ENCODE measurements at regions of chr10 and their contacts with region 1.

Region 1: DNA sequence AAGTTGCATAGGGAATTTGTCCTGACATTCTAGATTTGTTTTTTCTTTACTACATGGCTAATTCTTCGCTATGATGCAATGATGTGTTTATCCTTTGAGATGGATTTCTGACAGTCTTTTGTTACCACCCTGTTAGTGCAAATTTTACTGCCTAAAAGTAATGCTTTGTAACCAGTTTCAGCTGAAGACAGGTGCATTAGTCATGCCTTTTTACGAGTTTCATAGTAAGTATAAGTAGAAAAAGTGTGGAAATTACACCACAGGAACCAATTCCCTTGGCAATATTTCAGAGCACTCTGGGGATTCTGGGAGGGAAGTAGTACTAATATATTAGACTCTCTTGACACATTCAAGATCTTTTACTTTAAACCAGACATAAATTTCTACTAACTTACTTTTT is 257.8 kb upstream of the DKK1 start:
- DNase-seq: no peak
- ATAC-seq: no peak
- H3K4me3 ChIP-seq: no peak overlapping the region
- H3K27ac ChIP-seq: no peak overlapping the region
- H3K4me1 ChIP-seq: no peaks in the 10 kb centered on the region; the same call in 1 of the 2 replicates
- H3K27me3 ChIP-seq: no peaks in the 10 kb centered on the region
- CTCF ChIP-seq: no peak
- POLR2A ChIP-seq: no peak
- RAD21 ChIP-seq: no peak

Region 2: DNA sequence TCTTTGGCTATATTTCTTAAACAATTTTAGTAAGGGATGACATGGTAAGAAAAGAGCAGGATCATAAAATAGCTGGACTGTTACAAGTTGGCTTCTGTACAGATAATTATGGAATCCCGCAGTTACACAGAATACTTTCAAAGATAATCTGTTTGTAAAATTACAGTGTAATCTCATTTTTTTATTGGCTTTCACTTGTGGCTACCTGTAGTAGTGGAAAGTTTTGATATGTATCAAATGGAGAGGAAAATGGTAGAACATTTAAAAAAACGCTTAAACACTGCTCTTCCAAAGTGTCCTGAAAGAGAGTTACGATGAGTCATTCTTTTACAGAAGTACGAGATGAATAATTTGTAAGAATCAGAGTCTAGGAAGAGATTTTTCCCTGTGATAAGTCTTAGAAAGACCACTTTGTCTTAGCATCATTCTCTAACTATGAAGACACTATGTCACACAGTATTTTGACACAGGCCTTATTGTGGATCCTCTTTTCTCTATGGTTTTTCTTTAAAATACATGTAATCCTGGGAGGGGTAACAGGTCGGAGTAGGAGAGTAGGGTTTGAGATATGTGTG is 42.8 kb after region 1 on chr10:
- CTCF ChIA-PET with region 1: no interaction called
- POLR2A ChIA-PET with region 1: no interaction called
- dilution Hi-C with region 1: no loop called
- in situ Hi-C with region 1: no loop called
- intact Hi-C with region 1: loop called (anchors 5 kb)
- DNase-seq: no peak
- ATAC-seq: no peak
- H3K4me3 ChIP-seq: no peak overlapping the region
- H3K27ac ChIP-seq: no peak overlapping the region
- H3K4me1 ChIP-seq: no peaks in the 10 kb centered on the region
- H3K27me3 ChIP-seq: no peaks in the 10 kb centered on the region
- CTCF ChIP-seq: no peak
- POLR2A ChIP-seq: no peak
- RAD21 ChIP-seq: no peak

Region 3: DNA sequence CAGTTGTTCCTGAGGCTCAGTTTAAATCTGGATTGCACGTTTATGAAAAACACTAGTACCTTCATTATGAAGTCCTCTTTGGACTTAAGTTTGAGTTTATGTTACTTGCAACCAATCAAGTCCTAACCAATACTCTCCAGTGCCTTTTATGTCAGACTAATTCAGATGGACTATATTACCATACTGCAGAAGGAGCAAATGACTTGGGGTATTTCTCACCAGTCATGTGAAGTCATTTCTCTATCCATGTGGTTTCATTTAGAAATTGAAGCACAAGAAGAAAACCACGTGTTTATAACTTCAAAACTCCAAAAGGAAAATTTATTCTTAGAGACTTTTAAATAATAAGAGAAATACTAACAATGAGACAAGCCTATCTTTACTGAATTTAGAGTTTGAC is 514.7 kb after region 1 on chr10:
- CTCF ChIA-PET with region 1: no interaction called
- POLR2A ChIA-PET with region 1: no interaction called
- dilution Hi-C with region 1: no loop called
- in situ Hi-C with region 1: no loop called
- intact Hi-C with region 1: no loop called
- DNase-seq: peak; percentile 37
- ATAC-seq: peak; percentile 28; the same call in 1 of the 2 replicates
- H3K4me3 ChIP-seq: no peak overlapping the region
- H3K27ac ChIP-seq: no peak overlapping the region
- H3K4me1 ChIP-seq: peaks cover 3% of the 10 kb centered on the region
- H3K27me3 ChIP-seq: no peaks in the 10 kb centered on the region
- CTCF ChIP-seq: no peak
- POLR2A ChIP-seq: no peak
- RAD21 ChIP-seq: no peak

Region 4: DNA sequence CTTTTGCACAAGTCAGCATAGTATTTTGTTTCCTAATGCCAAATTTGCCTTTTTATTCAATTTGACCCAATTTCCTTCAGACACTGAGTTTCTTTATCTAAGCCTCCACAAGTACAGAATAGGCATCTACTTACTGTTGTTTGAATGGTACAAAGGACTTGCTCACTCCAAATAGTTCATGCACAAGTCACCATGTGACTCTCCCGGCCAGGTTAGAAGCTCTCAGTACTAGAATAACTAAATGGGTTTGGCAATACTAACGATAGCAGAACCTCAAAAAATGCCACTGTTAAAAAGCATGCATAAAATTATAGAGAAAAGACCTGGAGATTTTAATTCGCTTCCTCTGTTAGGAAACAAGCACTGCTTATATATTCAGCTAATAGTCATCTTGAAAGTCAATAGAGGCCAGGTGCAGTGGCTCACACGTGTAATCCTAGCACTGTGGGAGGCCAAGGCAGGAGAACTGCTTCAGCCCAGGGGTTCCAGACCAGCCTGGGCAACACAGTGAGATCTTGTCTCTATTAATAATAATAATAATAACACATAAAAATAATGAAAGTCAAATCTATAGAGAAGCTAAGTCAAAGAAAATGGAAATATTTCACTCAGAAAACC is 1052.1 kb after region 1 on chr10:
- CTCF ChIA-PET with region 1: no interaction called
- POLR2A ChIA-PET with region 1: no interaction called
- dilution Hi-C with region 1: no loop called
- in situ Hi-C with region 1: no loop called
- intact Hi-C with region 1: no loop called
- DNase-seq: no peak
- ATAC-seq: no peak
- H3K4me3 ChIP-seq: no peak overlapping the region
- H3K27ac ChIP-seq: no peak overlapping the region
- H3K4me1 ChIP-seq: no peaks in the 10 kb centered on the region
- H3K27me3 ChIP-seq: no peaks in the 10 kb centered on the region
- CTCF ChIP-seq: no peak
- POLR2A ChIP-seq: no peak
- RAD21 ChIP-seq: no peak